Activated B cell treated with CpG ODN at 0.5 μM for 24 hours (primary cell): ENCODE measurements at regions of chr2 and their contacts with region 1.

Region 1: DNA sequence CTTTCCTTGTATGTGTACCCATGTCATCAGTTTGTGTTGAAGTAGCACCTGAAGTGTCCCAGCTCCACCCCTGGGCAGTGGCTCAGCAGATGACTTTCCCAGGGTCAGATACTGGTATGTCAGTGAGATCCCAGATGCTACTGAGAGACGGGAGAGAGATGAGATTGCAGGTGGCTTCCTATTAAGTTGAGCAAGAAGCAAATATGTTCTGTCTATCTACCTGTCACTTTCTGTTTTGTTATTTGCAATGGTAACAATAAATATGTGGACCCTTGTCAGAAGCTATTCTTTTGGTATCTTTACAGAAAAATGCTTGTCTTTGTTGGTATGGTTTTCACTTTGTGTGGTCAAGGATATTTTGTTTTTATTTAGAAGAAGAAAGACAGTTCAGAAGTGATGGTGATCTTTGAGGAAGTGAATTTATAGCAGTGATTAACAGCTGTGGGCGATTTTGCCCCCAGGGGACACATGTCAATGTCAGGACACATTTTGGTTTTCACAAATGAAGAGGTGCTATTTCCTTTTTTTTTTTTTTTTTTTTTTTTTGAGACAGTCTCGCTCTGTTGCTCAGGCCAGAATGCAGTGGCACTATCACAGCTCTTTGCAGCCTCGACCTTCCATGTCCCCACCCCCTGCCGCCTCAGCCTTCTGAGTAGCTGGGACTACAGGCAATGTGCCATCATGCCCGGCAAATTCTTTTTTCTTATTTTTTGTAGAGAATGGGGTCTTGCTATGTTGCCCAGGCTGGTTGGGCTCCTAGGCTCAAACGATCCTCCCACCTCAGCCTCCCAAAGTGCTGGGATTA is 21.4 kb downstream of the MGAT5 start:
- DNase-seq: peak; percentile 54
- ATAC-seq: peak; percentile 85
- H3K4me3 Mint-ChIP-seq: peak overlapping the region; percentile 77
- H3K27ac Mint-ChIP-seq: peak overlapping the region; percentile 94
- H3K4me1 Mint-ChIP-seq: peaks cover 98% of the 10 kb centered on the region
- H3K27me3 Mint-ChIP-seq: no peaks in the 10 kb centered on the region
- CTCF ChIP-seq: no peak

Region 2: DNA sequence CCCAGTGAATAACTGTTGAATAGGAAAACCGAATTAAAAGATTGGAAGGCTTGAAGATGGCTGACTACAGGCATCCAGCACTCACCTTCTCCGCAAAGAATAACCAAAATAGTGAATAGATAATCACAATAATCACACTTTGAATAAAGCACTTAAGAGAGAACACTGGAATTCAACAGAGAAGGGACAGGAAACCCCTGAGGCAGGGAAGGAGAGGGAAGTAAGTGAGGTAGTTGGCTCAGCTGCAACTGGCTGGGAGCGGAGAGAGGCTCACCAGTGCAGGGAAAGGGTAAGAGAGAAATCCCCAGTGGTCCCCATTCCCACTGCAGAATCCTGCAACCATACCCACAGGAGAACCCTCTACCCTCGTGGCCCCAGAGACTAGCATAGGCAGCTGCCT is 460.4 kb before region 1 on chr2:
- CTCF ChIA-PET with region 1: no interaction called
- POLR2A ChIA-PET with region 1: interaction called, 11 read pairs
- intact Hi-C with region 1: no loop called
- DNase-seq: no peak
- ATAC-seq: no peak
- H3K4me3 Mint-ChIP-seq: no peak overlapping the region
- H3K27ac Mint-ChIP-seq: no peak overlapping the region
- H3K4me1 Mint-ChIP-seq: peaks cover 10% of the 10 kb centered on the region
- H3K27me3 Mint-ChIP-seq: peaks cover 2% of the 10 kb centered on the region
- CTCF ChIP-seq: no peak

Region 3: GRCh38 chr2:134253804-134254203 is 21.5 kb before region 1 on chr2 and contains the start of gene MGAT5:
- CTCF ChIA-PET with region 1: interaction called, 3 read pairs
- POLR2A ChIA-PET with region 1: interaction called, 18 read pairs
- intact Hi-C with region 1: loop called (anchors 1 kb)
- DNase-seq: no peak
- ATAC-seq: peak; percentile 43
- H3K4me3 Mint-ChIP-seq: peak within 1 kb of the TSS; percentile 74
- H3K27ac Mint-ChIP-seq: peak within 1 kb of the TSS; percentile 95
- H3K4me1 Mint-ChIP-seq: peaks cover 95% of the 10 kb centered on the region
- H3K27me3 Mint-ChIP-seq: no peaks in the 10 kb centered on the region
- CTCF ChIP-seq: no peak
- total RNA-seq, gene MGAT5: 66.7 and 69.0 TPM in 2 replicates

Region 4: GRCh38 chr2:134261398-134262131 is 13.7 kb before region 1 on chr2:
- CTCF ChIA-PET with region 1: interaction called, 23 read pairs
- POLR2A ChIA-PET with region 1: interaction called, 93 read pairs
- intact Hi-C with region 1: loop called (anchors 1 kb)
- DNase-seq: no peak
- ATAC-seq: peak; percentile 66
- H3K4me3 Mint-ChIP-seq: peak overlapping the region; percentile 38
- H3K27ac Mint-ChIP-seq: peak overlapping the region; percentile 97
- H3K4me1 Mint-ChIP-seq: peaks cover 91% of the 10 kb centered on the region
- H3K27me3 Mint-ChIP-seq: no peaks in the 10 kb centered on the region
- CTCF ChIP-seq: no peak

Region 5: GRCh38 chr2:134290358-134290757 is 15.1 kb after region 1 on chr2:
- CTCF ChIA-PET with region 1: interaction called, 3 read pairs
- POLR2A ChIA-PET with region 1: interaction called, 10 read pairs
- intact Hi-C with region 1: loop called (anchors 1 kb)
- DNase-seq: no peak
- ATAC-seq: peak; percentile 49
- H3K4me3 Mint-ChIP-seq: no peak overlapping the region
- H3K27ac Mint-ChIP-seq: no peak overlapping the region
- H3K4me1 Mint-ChIP-seq: no peaks in the 10 kb centered on the region
- H3K27me3 Mint-ChIP-seq: no peaks in the 10 kb centered on the region
- CTCF ChIP-seq: no peak

Region 6: DNA sequence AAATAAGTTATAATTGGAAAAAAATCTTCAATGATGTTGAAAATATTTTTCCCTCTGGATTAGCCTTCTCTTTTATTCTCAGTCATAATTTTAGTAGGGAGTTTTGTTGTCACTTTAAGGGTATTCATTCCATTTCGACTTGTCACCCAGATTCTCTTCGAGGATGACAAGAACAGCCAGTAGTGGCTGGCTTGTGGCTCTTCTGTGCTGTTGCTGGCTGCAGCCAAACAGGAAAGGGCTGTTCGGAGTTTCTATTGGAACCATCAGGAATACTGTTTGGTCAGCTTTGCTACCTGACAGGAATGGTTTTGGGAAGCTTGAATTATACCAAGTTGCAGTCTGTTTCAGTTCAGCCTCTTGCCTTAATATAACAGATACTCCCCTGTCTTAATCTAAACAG is 20.2 kb after region 1 on chr2:
- CTCF ChIA-PET with region 1: no interaction called
- POLR2A ChIA-PET with region 1: interaction called, 10 read pairs
- intact Hi-C with region 1: loop called (anchors 1 kb)
- DNase-seq: no peak
- ATAC-seq: no peak
- H3K4me3 Mint-ChIP-seq: no peak overlapping the region
- H3K27ac Mint-ChIP-seq: no peak overlapping the region
- H3K4me1 Mint-ChIP-seq: peaks cover 20% of the 10 kb centered on the region
- H3K27me3 Mint-ChIP-seq: no peaks in the 10 kb centered on the region
- CTCF ChIP-seq: no peak

Region 7: DNA sequence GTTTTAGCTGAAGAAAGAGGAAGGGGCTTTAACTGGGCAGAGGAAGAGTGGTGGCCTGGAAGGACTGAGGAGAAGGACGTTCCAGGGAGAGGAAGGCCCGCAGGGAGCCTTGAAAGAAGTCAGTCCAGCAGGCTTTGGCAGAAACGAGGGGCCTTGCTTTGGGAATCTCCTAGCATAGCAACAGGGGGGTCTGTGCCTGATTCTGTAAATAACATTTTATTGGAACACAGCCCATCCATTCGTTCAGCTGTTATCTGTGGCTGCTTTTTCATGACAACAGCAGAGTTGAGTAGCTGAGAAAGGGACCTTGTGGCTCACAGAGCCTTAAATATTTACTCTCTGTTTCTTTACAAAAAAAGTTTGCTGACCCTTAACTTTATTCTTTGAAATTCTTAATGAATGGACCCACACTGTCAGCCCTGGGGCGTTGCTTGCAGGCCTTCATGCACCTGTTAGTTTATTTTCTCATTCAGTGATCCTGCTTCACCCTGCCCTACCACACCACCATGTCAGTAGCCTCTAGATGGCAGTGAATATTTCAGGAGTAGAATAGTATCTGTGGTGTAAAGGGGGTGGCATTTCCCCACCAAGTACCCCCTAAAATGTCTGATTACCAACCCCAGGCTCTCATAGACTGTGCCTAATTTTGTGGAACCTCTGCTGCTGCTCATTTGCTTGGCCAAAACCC is 39.6 kb after region 1 on chr2:
- CTCF ChIA-PET with region 1: no interaction called
- POLR2A ChIA-PET with region 1: interaction called, 14 read pairs
- intact Hi-C with region 1: no loop called
- DNase-seq: no peak
- ATAC-seq: no peak
- H3K4me3 Mint-ChIP-seq: no peak overlapping the region
- H3K27ac Mint-ChIP-seq: peak overlapping the region; percentile 42
- H3K4me1 Mint-ChIP-seq: peaks cover 89% of the 10 kb centered on the region
- H3K27me3 Mint-ChIP-seq: no peaks in the 10 kb centered on the region
- CTCF ChIP-seq: no peak